ENCODE measurements at regions of chr15 and their contacts with region 1.

Region 1: GRCh38 chr15:41585127-41586047 is 26.4 kb downstream of the TYRO3 start:
- DNase-seq: peak; percentile 44
- ATAC-seq: peak; percentile 90
- H3K4me3 ChIP-seq: peak overlapping the region; percentile 23
- H3K27ac ChIP-seq: 0 out of 2 replicates have a peak overlapping the region, but pooled peaks have one; percentile 4
- H3K4me1 ChIP-seq: peaks cover 4% of the 10 kb centered on the region; the same call in 1 of the 2 replicates
- H3K27me3 ChIP-seq: peaks cover under 1% of the 10 kb centered on the region; the same call in 1 of the 2 replicates
- CTCF ChIP-seq: no peak; the same call in 1 of the 2 replicates
- POLR2A ChIP-seq: no peak
- RAD21 ChIP-seq: peak; percentile 22; the same call in 1 of the 2 replicates

Region 2: GRCh38 chr15:41596972-41597371 is 11.6 kb after region 1 on chr15:
- CTCF ChIA-PET with region 1: no interaction called
- POLR2A ChIA-PET with region 1: interaction called, 14 read pairs
- dilution Hi-C with region 1: no loop called
- in situ Hi-C with region 1: no loop called
- intact Hi-C with region 1: no loop called
- DNase-seq: no peak
- ATAC-seq: no peak
- H3K4me3 ChIP-seq: no peak overlapping the region
- H3K27ac ChIP-seq: no peak overlapping the region
- H3K4me1 ChIP-seq: peaks cover 3% of the 10 kb centered on the region
- H3K27me3 ChIP-seq: peaks cover 1% of the 10 kb centered on the region; the same call in 1 of the 2 replicates
- CTCF ChIP-seq: no peak
- POLR2A ChIP-seq: no peak
- RAD21 ChIP-seq: no peak

Region 3: DNA sequence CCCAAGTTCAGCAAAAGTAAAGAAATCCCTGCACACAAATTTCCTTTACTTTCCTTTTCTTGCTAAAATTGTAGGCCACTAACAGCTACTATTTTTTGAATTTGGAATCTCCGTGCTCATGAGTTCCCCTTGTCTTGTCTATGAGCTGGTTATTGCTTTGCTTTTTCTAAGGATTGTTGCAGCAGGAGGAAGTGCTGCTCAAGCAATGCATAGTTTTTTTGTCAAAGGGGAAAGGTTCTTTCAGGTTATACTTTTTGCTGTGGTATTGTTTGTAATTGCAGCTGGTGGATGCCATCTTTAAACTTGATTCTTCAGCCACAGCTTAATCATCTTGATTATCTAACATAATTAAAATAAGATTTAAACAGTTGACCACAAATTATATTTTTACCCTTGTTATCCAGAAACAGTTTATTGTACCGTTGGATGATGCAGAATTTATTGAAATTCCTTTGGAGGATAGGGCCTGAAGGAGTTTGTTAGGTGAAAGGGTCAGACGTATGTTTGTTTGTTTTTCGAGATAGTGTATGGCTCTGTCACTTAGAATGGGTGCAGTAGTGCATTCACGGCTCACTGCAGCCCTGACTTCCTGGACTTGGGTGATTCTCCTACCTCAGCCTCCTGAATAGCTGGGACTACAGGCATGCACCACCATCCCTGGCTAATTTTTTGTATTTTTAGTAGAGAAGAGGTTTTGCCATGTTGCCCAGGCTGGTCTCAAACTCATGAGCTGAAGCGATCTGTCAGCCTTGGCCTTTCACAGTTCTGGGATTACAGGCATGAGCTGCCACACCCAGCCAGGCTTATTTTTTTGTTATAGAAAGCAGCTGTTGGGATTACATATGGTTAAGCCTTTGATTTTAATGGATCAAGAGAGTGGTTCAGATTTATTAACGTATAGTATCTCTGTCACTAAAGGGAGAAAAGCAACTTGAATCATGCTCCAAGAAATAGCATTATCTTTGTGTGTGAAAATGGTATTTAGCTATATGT is 86.6 kb after region 1 on chr15:
- CTCF ChIA-PET with region 1: no interaction called
- POLR2A ChIA-PET with region 1: no interaction called
- dilution Hi-C with region 1: no loop called
- in situ Hi-C with region 1: no loop called
- intact Hi-C with region 1: no loop called
- DNase-seq: no peak
- ATAC-seq: no peak
- H3K4me3 ChIP-seq: no peak overlapping the region
- H3K27ac ChIP-seq: no peak overlapping the region
- H3K4me1 ChIP-seq: peaks cover 6% of the 10 kb centered on the region; the same call in 1 of the 2 replicates
- H3K27me3 ChIP-seq: no peaks in the 10 kb centered on the region
- CTCF ChIP-seq: no peak
- POLR2A ChIP-seq: no peak
- RAD21 ChIP-seq: no peak

Measured in IMR-90 (cell line).